Activated B cell treated with CpG ODN at 0.5 μM for 24 hours (primary cell): ENCODE measurements at regions of chr3 and their contacts with region 1.

Region 1: GRCh38 chr3:45760878-45761711 is 35.2 kb downstream of the SLC6A20 start:
- DNase-seq: no peak
- ATAC-seq: no peak
- H3K4me3 Mint-ChIP-seq: no peak overlapping the region
- H3K27ac Mint-ChIP-seq: no peak overlapping the region
- H3K4me1 Mint-ChIP-seq: peaks cover 3% of the 10 kb centered on the region
- H3K27me3 Mint-ChIP-seq: no peaks in the 10 kb centered on the region
- CTCF ChIP-seq: no peak

Region 2: GRCh38 chr3:45507820-45508317 is 253.2 kb before region 1 on chr3:
- CTCF ChIA-PET with region 1: no interaction called
- POLR2A ChIA-PET with region 1: no interaction called
- intact Hi-C with region 1: loop called (anchors 2 kb)
- DNase-seq: no peak
- ATAC-seq: no peak
- H3K4me3 Mint-ChIP-seq: no peak overlapping the region
- H3K27ac Mint-ChIP-seq: no peak overlapping the region
- H3K4me1 Mint-ChIP-seq: no peaks in the 10 kb centered on the region
- H3K27me3 Mint-ChIP-seq: no peaks in the 10 kb centered on the region
- CTCF ChIP-seq: no peak

Region 3: GRCh38 chr3:45716790-45717336 is 44.2 kb before region 1 on chr3:
- CTCF ChIA-PET with region 1: no interaction called
- POLR2A ChIA-PET with region 1: no interaction called
- intact Hi-C with region 1: no loop called
- DNase-seq: no peak
- ATAC-seq: no peak
- H3K4me3 Mint-ChIP-seq: no peak overlapping the region
- H3K27ac Mint-ChIP-seq: no peak overlapping the region
- H3K4me1 Mint-ChIP-seq: no peaks in the 10 kb centered on the region
- H3K27me3 Mint-ChIP-seq: no peaks in the 10 kb centered on the region
- CTCF ChIP-seq: no peak

Region 4: DNA sequence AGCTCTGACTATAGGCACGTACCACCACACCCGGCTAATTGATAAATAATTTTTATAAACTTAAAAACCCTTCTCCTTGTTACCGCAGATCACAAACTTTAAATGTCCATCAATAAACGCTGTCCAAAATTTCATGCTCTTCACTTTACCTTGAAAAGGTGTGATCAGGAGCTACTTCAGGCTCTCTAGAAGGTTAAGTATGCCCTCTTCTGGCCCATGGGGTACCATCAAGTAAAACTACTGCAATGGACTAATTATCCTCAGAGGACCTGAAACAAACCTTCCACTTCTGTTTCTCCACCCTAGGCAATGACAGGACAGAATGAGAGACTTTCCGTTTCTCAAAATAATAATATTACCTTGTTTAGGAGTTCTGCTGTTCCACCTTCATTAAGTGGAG is 71.6 kb after region 1 on chr3:
- CTCF ChIA-PET with region 1: no interaction called
- POLR2A ChIA-PET with region 1: no interaction called
- intact Hi-C with region 1: loop called (anchors 1 kb)
- DNase-seq: no peak
- ATAC-seq: no peak
- H3K4me3 Mint-ChIP-seq: no peak overlapping the region
- H3K27ac Mint-ChIP-seq: no peak overlapping the region
- H3K4me1 Mint-ChIP-seq: no peaks in the 10 kb centered on the region
- H3K27me3 Mint-ChIP-seq: no peaks in the 10 kb centered on the region
- CTCF ChIP-seq: no peak

Region 5: GRCh38 chr3:45890405-45890804 is 129.3 kb after region 1 on chr3:
- CTCF ChIA-PET with region 1: no interaction called
- POLR2A ChIA-PET with region 1: no interaction called
- intact Hi-C with region 1: no loop called
- DNase-seq: no peak
- ATAC-seq: no peak
- H3K4me3 Mint-ChIP-seq: peak overlapping the region; percentile 25
- H3K27ac Mint-ChIP-seq: peak overlapping the region; percentile 54
- H3K4me1 Mint-ChIP-seq: peaks cover 70% of the 10 kb centered on the region
- H3K27me3 Mint-ChIP-seq: no peaks in the 10 kb centered on the region
- CTCF ChIP-seq: no peak

Region 6: GRCh38 chr3:45929042-45929679 is 168.1 kb after region 1 on chr3:
- CTCF ChIA-PET with region 1: interaction called, 50 read pairs
- POLR2A ChIA-PET with region 1: no interaction called
- intact Hi-C with region 1: loop called (anchors 1 kb)
- DNase-seq: peak; percentile 54
- ATAC-seq: peak; percentile 92
- H3K4me3 Mint-ChIP-seq: no peak overlapping the region
- H3K27ac Mint-ChIP-seq: no peak overlapping the region
- H3K4me1 Mint-ChIP-seq: no peaks in the 10 kb centered on the region
- H3K27me3 Mint-ChIP-seq: no peaks in the 10 kb centered on the region
- CTCF ChIP-seq: no peak

Region 7: DNA sequence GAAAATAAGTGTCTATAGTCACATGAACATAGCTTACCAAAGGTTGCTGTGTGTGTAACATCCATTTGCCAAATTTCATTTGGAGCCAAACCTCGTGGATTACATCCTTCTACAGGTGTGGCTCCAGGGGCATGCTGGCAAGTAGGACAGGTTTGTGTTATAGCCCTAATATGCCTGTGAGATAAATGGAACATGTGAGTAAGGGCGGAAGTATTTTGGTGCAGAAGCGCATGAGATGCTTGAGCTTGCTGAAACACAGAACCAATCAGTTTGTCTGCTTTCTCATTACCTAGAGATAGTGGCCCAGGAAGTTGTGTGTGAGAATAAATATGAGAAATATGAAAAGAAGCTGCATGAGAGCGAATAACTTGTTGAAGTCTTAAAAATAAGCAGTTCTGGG is 288.0 kb after region 1 on chr3:
- CTCF ChIA-PET with region 1: no interaction called
- POLR2A ChIA-PET with region 1: interaction called, 10 read pairs
- intact Hi-C with region 1: no loop called
- DNase-seq: no peak
- ATAC-seq: no peak
- H3K4me3 Mint-ChIP-seq: no peak overlapping the region
- H3K27ac Mint-ChIP-seq: no peak overlapping the region
- H3K4me1 Mint-ChIP-seq: no peaks in the 10 kb centered on the region
- H3K27me3 Mint-ChIP-seq: peaks cover 28% of the 10 kb centered on the region
- CTCF ChIP-seq: no peak

Region 8: GRCh38 chr3:46378426-46378942 is 617.4 kb after region 1 on chr3:
- CTCF ChIA-PET with region 1: no interaction called
- POLR2A ChIA-PET with region 1: no interaction called
- intact Hi-C with region 1: loop called (anchors 10 kb)
- DNase-seq: peak; percentile 42
- ATAC-seq: peak; percentile 40
- H3K4me3 Mint-ChIP-seq: no peak overlapping the region
- H3K27ac Mint-ChIP-seq: no peak overlapping the region
- H3K4me1 Mint-ChIP-seq: peaks cover 43% of the 10 kb centered on the region
- H3K27me3 Mint-ChIP-seq: no peaks in the 10 kb centered on the region
- CTCF ChIP-seq: no peak

Region 9: DNA sequence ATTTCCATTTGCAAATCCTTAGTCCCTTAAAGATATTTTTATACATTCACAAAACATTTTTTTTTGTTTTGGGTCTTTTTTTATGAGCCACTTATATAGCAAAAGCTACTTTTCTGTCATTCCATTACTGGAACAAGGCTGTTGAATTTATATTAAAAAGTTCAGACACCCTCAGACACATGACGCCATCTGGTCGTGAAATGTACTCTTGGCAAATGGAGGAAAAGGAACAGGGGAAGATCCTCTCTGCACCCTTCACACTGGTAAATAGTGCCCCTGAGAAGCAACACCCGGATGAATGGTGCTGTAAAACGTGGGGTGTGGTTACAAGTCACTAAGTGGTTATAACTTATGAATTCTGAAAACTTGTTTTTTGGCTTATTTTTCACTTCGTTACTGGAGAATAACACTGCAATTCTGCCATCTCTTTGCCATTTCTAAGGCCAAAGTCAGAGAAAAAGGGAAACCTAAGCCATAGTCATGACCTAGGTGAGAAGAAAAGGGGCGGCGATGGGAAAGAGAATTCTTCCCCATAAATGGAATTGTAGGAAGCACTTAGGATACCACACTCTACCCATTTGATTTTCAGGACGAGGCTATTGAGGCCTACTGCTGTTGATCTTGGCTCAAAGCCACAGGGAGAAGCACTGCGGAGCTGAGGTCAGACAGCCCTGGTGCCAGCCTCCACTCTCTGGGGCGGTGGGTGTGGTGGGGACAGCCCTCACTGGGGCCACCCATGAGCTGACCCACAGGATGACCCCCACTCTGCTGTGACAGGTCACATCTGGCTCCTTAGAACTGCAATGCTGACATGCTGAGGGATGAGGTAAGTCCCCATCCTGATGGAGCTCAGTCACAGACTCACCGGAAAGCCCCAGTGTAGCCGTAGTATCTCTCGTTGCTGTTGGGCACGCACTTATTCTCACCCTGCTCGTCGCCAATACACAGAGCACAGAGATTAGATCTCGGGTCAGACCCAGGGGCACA is 681.8 kb after region 1 on chr3:
- CTCF ChIA-PET with region 1: no interaction called
- POLR2A ChIA-PET with region 1: no interaction called
- intact Hi-C with region 1: loop called (anchors 2 kb)
- DNase-seq: no peak
- ATAC-seq: no peak
- H3K4me3 Mint-ChIP-seq: no peak overlapping the region
- H3K27ac Mint-ChIP-seq: no peak overlapping the region
- H3K4me1 Mint-ChIP-seq: peaks cover 39% of the 10 kb centered on the region
- H3K27me3 Mint-ChIP-seq: no peaks in the 10 kb centered on the region
- CTCF ChIP-seq: no peak